Natural killer cell (primary cell): ENCODE measurements at regions of chr10 and their contacts with region 1.

Region 1: GRCh38 chr10:62681211-62681940 is 123.1 kb upstream of the ADO start:
- DNase-seq: peak; percentile 70 to 91
- ATAC-seq: peak; percentile 84 to 90 (median 90)
- H3K4me3 ChIP-seq: no peak overlapping the region
- H3K4me3 Mint-ChIP-seq: peak overlapping the region; percentile 13
- H3K27ac ChIP-seq: peak overlapping the region; percentile 15
- H3K27ac Mint-ChIP-seq: peak overlapping the region; percentile 61 to 85
- H3K4me1 ChIP-seq: peaks cover 18% of the 10 kb centered on the region
- H3K4me1 Mint-ChIP-seq: peaks cover 34 to 55% of the 10 kb centered on the region in 2 donors
- H3K27me3 ChIP-seq: no peaks in the 10 kb centered on the region
- H3K27me3 Mint-ChIP-seq: no peaks in the 10 kb centered on the region
- CTCF ChIP-seq: peak; percentile 36

Region 2: GRCh38 chr10:62473241-62473640 is 208.1 kb before region 1 on chr10:
- intact Hi-C with region 1: no loop called
- DNase-seq: no peak
- ATAC-seq: no peak
- H3K4me3 ChIP-seq: no peak overlapping the region
- H3K4me3 Mint-ChIP-seq: no peak overlapping the region
- H3K27ac ChIP-seq: no peak overlapping the region
- H3K27ac Mint-ChIP-seq: no peak overlapping the region
- H3K4me1 ChIP-seq: no peaks in the 10 kb centered on the region
- H3K4me1 Mint-ChIP-seq: no peaks in the 10 kb centered on the region
- H3K27me3 ChIP-seq: no peaks in the 10 kb centered on the region
- H3K27me3 Mint-ChIP-seq: no peaks in the 10 kb centered on the region
- CTCF ChIP-seq: no peak

Region 3: GRCh38 chr10:62632071-62632809 is 49.1 kb before region 1 on chr10:
- intact Hi-C with region 1: loop called (anchors 1 kb)
- DNase-seq: peak; percentile 65 to 80
- ATAC-seq: peak; percentile 77 to 91 (median 83)
- H3K4me3 ChIP-seq: no peak overlapping the region
- H3K4me3 Mint-ChIP-seq: peak overlapping the region; percentile 63
- H3K27ac ChIP-seq: peak overlapping the region; percentile 85
- H3K27ac Mint-ChIP-seq: peak overlapping the region in 1 of 2 donors; percentile 99
- H3K4me1 ChIP-seq: peaks cover 44% of the 10 kb centered on the region
- H3K4me1 Mint-ChIP-seq: peaks cover 19 to 23% of the 10 kb centered on the region in 2 donors
- H3K27me3 ChIP-seq: no peaks in the 10 kb centered on the region
- H3K27me3 Mint-ChIP-seq: no peaks in the 10 kb centered on the region
- CTCF ChIP-seq: no peak

Region 4: GRCh38 chr10:62694537-62695126 is 13.3 kb after region 1 on chr10:
- intact Hi-C with region 1: loop called (anchors 2 kb)
- DNase-seq: peak in 1 of 2 donors; percentile 55
- ATAC-seq: peak; percentile 58 to 81 (median 74)
- H3K4me3 ChIP-seq: no peak overlapping the region
- H3K4me3 Mint-ChIP-seq: peak overlapping the region; percentile 61
- H3K27ac ChIP-seq: peak overlapping the region; percentile 41
- H3K27ac Mint-ChIP-seq: peak overlapping the region; percentile 90 to 92
- H3K4me1 ChIP-seq: peaks cover 34% of the 10 kb centered on the region
- H3K4me1 Mint-ChIP-seq: peaks cover 63 to 69% of the 10 kb centered on the region in 2 donors
- H3K27me3 ChIP-seq: no peaks in the 10 kb centered on the region
- H3K27me3 Mint-ChIP-seq: no peaks in the 10 kb centered on the region
- CTCF ChIP-seq: no peak

Region 5: DNA sequence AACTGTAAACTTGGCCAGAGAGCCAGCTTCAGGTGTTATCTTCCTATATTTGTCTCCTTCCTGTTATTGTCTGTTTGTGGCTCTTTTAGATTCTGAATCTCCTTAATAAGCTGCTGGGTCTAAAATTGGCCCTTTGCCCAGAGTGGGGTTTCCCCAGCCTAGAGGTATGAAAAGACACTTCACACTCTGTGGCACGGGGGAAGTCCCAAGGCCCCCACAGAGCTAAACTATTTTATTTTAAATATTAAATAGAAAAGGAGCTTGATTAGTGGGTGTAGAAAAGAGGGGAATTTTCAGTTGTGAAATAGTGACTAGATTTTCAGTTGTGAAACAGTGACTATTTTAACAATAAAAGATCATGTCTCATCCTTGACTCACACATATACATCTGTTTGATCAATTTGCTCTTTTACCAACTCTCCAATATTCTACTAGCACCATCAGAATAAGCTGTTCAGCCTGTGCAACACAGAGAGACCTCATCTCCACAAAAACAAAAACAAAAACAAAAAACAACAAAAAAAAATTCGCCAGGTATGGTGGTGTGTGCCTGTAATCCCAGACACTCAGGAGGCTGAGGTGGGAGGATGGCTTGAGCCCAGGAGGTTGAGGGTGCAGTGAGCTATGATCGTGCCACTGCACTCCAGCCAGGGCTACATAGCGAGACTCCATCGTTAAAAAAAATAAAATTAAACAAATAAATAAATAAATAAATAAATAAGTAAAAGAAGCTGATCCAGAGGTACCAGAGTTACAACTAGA is 98.3 kb after region 1 on chr10:
- intact Hi-C with region 1: loop called (anchors 1 kb)
- DNase-seq: peak; percentile 76 to 97
- ATAC-seq: peak; percentile 92 to 98 (median 97)
- H3K4me3 ChIP-seq: no peak overlapping the region
- H3K4me3 Mint-ChIP-seq: peak overlapping the region; percentile 45
- H3K27ac ChIP-seq: no peak overlapping the region
- H3K27ac Mint-ChIP-seq: peak overlapping the region; percentile 43 to 57
- H3K4me1 ChIP-seq: peaks cover 14% of the 10 kb centered on the region
- H3K4me1 Mint-ChIP-seq: peaks cover 22% of the 10 kb centered on the region in 2 donors
- H3K27me3 ChIP-seq: no peaks in the 10 kb centered on the region
- H3K27me3 Mint-ChIP-seq: no peaks in the 10 kb centered on the region
- CTCF ChIP-seq: no peak